Activated T-helper 1 cell treated with anti-CD3 and anti-CD28 coated beads, Interleukin-12 subunit alpha, Interleukin-12 subunit beta, Interleukin-2, Interleukin-4 antibody, amounts not matched to agents 30 ng/mL and 10 ng/mL and 1 ng/mL, durations not matched to agents 14 hours and 24 hours and 36 hours (primary cell): ENCODE measurements at regions of chr19 and their contacts with region 1.

Region 1: GRCh38 chr19:29714953-29715700 is at the start of gene C19orf12:
- DNase-seq: peak; percentile 66
- H3K4me3 Mint-ChIP-seq: peak within 1 kb of the TSS; percentile 94
- H3K27ac Mint-ChIP-seq: peak within 1 kb of the TSS; percentile 98
- H3K4me1 Mint-ChIP-seq: peaks cover 57% of the 10 kb centered on the region
- H3K27me3 Mint-ChIP-seq: no peaks in the 10 kb centered on the region
- total RNA-seq, gene C19orf12: 47.9 and 50.2 TPM in 2 replicates

Region 2: GRCh38 chr19:29671393-29672160 is 43.5 kb before region 1 on chr19:
- intact Hi-C with region 1: loop called (anchors 1 kb)
- DNase-seq: peak; percentile 75
- H3K4me3 Mint-ChIP-seq: peak overlapping the region; percentile 76
- H3K27ac Mint-ChIP-seq: peak overlapping the region; percentile 92
- H3K4me1 Mint-ChIP-seq: peaks cover 75% of the 10 kb centered on the region
- H3K27me3 Mint-ChIP-seq: no peaks in the 10 kb centered on the region

Region 3: GRCh38 chr19:29694669-29695627 is 20.2 kb before region 1 on chr19:
- intact Hi-C with region 1: loop called (anchors 1 kb)
- DNase-seq: peak; percentile 73
- H3K4me3 Mint-ChIP-seq: no peak overlapping the region
- H3K27ac Mint-ChIP-seq: peak overlapping the region; percentile 70
- H3K4me1 Mint-ChIP-seq: peaks cover 15% of the 10 kb centered on the region
- H3K27me3 Mint-ChIP-seq: no peaks in the 10 kb centered on the region

Region 4: GRCh38 chr19:29704562-29705558 is 10.3 kb before region 1 on chr19:
- intact Hi-C with region 1: loop called (anchors 1 kb)
- DNase-seq: no peak
- H3K4me3 Mint-ChIP-seq: peak overlapping the region; percentile 53
- H3K27ac Mint-ChIP-seq: peak overlapping the region; percentile 92
- H3K4me1 Mint-ChIP-seq: peaks cover 52% of the 10 kb centered on the region
- H3K27me3 Mint-ChIP-seq: no peaks in the 10 kb centered on the region

Region 5: DNA sequence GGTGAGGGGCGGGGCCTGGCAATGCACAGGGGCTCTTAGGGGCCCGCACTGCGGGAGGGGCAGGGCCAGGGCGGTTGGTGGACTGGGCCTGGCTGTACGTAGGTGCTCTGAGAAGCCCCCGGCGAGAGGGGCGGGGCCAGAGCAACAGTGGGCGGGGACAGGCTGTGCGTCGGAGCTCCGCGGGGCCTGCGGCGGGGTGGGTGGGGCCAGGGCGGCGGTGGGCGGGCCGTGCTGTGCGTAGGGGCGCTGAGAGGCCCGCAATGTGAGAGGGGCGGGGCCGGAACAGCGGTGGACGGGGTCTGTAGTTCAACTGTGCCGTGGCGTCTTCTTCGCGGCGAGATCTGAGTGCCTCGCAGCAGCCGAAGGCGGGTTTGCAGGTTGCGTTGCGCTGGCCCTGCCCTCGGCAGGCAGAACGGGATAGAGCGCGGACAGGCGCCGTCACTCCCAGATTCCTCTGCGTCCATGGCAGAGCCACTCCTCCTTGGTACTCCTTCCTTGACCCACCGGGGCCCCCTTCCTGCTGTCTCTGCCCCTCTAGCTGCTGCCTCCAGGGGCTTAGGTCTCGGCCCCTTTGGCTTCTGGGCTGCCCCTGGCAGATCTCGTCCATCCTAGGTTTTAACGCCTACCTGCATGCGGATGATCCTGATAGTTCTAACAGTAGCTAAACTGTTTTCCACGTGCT is 129.9 kb after region 1 on chr19:
- intact Hi-C with region 1: loop called (anchors 1 kb)
- DNase-seq: peak; percentile 93
- H3K4me3 Mint-ChIP-seq: peak overlapping the region; percentile 84
- H3K27ac Mint-ChIP-seq: peak overlapping the region; percentile 80
- H3K4me1 Mint-ChIP-seq: peaks cover 30% of the 10 kb centered on the region
- H3K27me3 Mint-ChIP-seq: peaks cover 4% of the 10 kb centered on the region

Region 6: DNA sequence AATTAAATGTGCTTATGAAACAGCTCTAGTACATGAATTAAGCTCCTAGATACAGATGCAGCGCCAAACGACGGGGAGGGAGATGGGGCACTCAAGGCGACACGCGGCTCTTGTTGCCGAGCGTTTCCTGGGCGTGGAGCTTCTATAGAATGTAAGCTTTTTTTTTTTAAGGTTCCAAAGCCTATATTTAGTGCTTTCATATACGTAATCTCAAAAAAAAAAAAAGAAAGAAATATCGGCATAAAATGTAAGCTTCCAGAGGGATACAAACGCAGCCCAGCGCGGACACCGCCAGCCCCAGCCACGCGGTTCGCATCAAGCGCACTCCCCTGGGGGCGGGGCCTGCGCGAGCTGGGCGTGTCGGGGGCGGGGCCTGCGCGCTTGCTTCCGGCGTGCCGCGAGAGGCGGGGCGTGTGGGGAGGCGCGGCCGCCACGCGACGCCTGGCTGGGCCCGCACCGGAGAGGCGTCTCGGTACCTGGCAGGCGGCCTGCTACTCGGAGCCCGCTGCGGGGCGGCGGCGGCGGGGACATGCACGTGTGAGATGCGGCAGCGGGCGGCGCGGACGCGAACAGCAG is 226.8 kb after region 1 on chr19 and contains the start of gene URI1:
- intact Hi-C with region 1: loop called (anchors 5 kb)
- DNase-seq: peak; percentile 93
- H3K4me3 Mint-ChIP-seq: peak within 1 kb of the TSS; percentile 97
- H3K27ac Mint-ChIP-seq: peak within 1 kb of the TSS; percentile 96
- H3K4me1 Mint-ChIP-seq: peaks cover 48% of the 10 kb centered on the region
- H3K27me3 Mint-ChIP-seq: peaks cover 2% of the 10 kb centered on the region
- total RNA-seq, gene URI1: 62.9 and 67.6 TPM in 2 replicates